Posterior vena cava (tissue), 2 donors: ENCODE measurements at regions of chr22 and their contacts with region 1.

Region 1: GRCh38 chr22:34395370-34395769 is 475.1 kb upstream of the LARGE1 start:
- DNase-seq: no peak

Region 2: DNA sequence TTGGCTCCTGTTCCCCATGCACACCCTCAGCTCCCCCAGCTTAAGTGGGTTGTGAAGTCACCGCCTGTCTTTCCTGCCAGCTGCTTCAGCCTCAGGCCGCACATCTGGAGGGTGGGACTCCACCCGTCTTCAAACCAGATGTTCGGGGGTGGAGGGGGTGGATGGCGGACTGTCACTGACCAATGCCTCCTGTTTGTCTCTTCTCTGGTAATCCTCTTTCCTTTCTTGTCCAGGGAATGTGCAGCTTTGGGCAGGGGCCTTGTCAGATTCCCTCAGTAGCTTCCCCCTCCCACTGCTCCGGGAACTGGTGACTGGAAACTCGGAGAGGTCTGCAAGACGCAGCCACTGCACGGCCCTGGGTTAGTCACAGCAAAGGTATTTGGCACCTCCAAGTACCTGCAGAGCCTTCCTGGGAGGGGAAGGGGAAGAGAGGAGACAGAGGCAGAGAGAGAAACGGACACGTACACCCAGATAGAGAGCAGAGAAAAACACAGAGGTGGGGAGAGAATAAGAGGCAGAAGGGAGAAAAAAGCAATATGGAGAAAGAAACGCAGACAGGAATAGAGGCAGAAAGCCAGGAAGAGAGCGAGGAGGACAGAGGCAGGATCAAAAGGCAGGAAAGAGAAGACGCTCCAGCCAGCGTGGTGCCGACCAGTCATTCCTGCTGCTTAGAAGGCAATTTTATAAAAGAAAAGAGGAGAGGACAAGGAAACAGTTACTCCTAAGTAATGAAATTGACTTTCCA is 1649.9 kb before region 1 on chr22:
- intact Hi-C with region 1: loop called in 1 of 2 experiments (anchors 10 kb)
- DNase-seq: no peak